ENCODE measurements at regions of chr19 and their contacts with region 1.

Region 1: DNA sequence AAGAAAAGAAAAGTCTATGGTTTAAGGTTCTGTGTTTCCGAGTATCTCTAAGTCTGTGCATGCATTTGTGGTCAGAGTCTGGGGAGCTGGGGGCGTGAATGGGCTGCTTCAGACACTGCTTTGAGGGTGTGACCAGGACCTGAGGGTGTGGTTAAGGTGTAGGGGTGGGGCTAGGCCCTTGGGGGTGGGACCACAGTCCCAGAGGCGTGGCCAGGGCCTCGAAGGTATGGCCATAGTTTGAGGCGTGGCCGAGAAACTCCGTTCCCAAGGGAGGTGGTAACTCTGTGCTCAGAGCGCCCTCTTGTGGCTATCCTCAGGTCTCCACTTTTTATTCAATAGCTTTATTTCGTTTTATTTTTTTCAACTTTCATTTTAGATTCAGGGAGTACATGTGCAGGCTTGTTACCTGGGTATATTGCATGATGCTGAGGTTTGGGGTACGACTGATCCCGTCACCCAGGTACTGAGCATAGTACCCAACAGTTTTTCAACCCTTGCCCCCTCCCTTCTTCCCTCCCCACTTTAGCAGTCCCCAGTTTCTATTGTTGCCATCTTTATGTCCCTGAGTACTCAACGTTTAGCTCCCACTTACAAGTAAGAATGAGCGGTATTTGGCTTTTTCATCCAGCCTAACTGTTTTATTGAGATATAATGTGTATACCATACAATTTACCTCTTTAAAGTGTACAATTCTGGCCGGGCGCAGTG is 7.0 kb upstream of the CBLC start:
- H3K4me3 Mint-ChIP-seq: peak overlapping the region; percentile 64
- H3K27ac Mint-ChIP-seq: peak overlapping the region; percentile 87
- H3K4me1 Mint-ChIP-seq: peaks cover 41% of the 10 kb centered on the region
- H3K27me3 Mint-ChIP-seq: peaks cover 8% of the 10 kb centered on the region

Region 2: DNA sequence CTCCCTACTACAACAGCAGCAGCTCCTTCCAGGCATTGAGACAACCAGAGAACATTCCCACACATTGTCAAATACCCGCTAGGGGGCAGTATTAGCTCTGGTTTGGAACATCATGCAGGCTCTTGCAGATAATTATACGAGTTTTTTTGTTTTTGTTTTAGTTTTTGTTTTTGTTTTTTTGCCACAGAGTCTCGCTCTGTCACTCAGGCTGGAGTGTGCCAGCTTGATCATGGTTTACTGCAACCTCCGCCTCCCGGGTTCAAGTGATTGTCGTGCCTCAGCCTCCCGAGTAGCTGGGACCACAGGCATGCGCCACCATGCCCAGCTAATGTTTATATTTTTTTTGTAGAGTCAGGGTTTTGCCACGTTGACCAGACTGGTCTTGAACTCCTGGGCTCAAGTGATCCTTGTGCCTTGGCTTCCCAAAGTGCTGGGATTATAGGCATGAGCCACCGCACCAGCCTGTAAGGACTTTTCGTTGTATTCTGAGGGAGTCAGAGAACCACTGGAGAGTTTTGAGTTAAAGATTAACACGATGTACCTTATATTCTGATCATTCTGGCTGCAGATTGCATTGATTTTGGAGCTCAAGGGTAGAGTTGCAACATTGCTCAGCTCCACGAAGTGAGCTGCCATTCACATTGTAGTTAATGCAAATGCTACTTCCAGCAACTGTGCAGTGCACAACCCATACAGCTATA is 199.6 kb before region 1 on chr19:
- intact Hi-C with region 1: loop called (anchors 2 kb)
- H3K4me3 Mint-ChIP-seq: no peak overlapping the region
- H3K27ac Mint-ChIP-seq: no peak overlapping the region
- H3K4me1 Mint-ChIP-seq: peaks cover 39% of the 10 kb centered on the region
- H3K27me3 Mint-ChIP-seq: peaks cover 16% of the 10 kb centered on the region

Region 3: GRCh38 chr19:44657211-44657921 is 113.3 kb before region 1 on chr19:
- intact Hi-C with region 1: loop called (anchors 1 kb)
- H3K4me3 Mint-ChIP-seq: no peak overlapping the region
- H3K27ac Mint-ChIP-seq: no peak overlapping the region
- H3K4me1 Mint-ChIP-seq: peaks cover 28% of the 10 kb centered on the region
- H3K27me3 Mint-ChIP-seq: no peaks in the 10 kb centered on the region

Region 4: DNA sequence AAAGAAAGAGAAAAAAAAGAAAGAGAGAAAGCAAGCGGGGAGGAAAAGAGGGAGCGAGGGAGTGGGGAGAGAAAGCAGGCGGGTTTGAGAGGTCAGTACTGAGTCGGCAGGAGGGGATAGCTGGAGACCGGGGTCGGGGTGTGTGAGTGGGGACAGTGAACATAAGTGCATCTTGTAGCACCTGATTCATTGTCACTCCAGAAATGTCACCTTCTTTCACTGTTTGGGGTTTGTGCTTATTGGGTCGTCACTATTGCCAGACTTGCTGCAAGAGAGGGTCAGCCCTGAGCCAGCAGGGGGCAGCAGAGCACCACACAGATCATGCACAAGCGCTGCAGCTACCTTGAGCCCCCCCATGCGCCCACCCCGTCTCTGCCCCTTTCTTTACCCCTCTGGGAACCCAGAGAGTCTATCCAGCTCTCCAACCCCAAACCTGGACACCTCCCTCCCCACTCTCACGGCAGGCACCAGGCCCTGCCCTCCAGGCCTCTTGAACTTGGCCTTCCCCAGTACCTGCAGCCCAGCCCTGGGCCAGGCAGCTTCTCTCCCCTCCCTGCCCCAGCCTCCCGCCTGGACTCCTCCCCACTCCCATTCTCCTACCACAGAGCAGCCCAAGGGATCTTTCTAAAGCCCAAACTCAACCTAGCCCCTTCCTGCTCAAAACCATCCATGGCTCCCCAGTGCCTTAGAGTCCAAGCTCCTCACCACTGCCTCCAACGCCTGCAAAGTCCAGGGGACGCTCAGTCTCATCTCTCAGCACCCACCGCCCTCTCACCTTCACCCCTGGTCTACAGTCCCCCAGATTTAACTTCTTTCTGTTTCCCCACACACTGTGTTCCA is 81.4 kb before region 1 on chr19:
- intact Hi-C with region 1: loop called (anchors 2 kb)
- H3K4me3 Mint-ChIP-seq: no peak overlapping the region
- H3K27ac Mint-ChIP-seq: peak overlapping the region; percentile 67
- H3K4me1 Mint-ChIP-seq: peaks cover 74% of the 10 kb centered on the region
- H3K27me3 Mint-ChIP-seq: peaks cover 6% of the 10 kb centered on the region

Region 5: GRCh38 chr19:44723952-44724319 is 46.8 kb before region 1 on chr19:
- intact Hi-C with region 1: loop called (anchors 1 kb)
- H3K4me3 Mint-ChIP-seq: peak overlapping the region; percentile 53
- H3K27ac Mint-ChIP-seq: peak overlapping the region; percentile 73
- H3K4me1 Mint-ChIP-seq: peaks cover 84% of the 10 kb centered on the region
- H3K27me3 Mint-ChIP-seq: peaks cover 1% of the 10 kb centered on the region

Region 6: GRCh38 chr19:44747739-44748425 is 22.8 kb before region 1 on chr19:
- intact Hi-C with region 1: loop called (anchors 2 kb)
- H3K4me3 Mint-ChIP-seq: peak overlapping the region; percentile 79
- H3K27ac Mint-ChIP-seq: peak overlapping the region; percentile 93
- H3K4me1 Mint-ChIP-seq: peaks cover 68% of the 10 kb centered on the region
- H3K27me3 Mint-ChIP-seq: no peaks in the 10 kb centered on the region

Region 7: DNA sequence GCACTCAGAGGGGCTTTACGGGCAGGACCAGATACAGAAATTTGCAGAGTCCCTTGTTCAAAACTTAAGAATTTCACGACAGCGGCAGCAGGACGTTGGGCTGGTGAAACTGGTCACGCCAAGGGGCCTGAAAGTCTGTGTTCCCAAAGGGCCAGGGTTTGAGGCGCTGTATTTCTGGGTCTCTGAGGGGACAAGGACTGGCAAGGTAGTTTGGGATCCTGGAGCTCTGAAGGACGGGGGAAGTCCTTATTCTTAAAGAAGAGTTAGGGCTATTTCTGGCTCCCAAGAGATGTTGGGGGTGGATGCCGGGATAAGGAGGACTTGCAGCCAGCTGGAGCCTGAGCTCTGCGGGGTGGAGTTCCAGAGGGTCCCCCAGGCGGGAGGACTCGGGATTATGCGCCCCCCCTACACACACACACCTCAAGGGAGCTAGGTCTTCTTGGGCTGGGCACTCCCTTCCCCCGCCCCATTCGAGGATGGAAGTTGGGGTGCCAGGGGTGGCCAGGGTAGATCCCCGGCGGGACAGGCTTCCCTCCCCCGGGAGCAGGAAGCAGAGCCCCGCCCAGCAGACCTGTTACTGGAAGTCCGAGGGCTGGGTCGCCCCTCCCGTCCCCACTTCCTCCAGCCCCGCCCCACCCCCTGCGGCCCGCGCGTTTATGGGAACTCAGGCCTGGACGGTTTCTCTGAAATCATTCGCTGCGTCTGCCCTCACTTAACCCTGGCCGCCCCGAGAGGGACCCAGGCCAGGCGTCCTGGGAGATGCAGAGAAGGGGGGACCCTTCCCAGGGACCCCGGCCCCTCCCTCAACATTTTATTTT is 16.6 kb before region 1 on chr19:
- intact Hi-C with region 1: loop called (anchors 2 kb)
- H3K4me3 Mint-ChIP-seq: peak overlapping the region; percentile 97
- H3K27ac Mint-ChIP-seq: peak overlapping the region; percentile 97
- H3K4me1 Mint-ChIP-seq: peaks cover 65% of the 10 kb centered on the region
- H3K27me3 Mint-ChIP-seq: no peaks in the 10 kb centered on the region

Region 8: DNA sequence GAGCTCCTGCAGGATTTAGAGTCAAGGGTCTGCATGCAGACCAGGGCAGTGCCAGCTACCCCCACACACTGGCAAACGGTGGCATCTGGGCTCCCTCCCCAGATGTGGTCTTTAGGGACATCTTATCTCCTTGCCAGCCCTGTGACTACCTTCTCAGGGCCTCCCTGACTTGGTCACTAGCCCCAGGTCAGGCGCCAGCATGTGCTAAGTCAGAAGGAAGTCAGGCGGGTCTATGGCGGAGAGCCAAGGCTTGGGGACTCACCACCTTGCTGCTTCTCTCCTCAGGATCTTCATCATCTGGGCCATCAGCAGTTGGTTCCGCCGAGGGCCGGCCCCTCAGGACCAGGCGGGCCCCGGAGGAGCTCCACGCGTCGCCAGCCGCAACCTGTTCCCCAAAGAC is 202.1 kb after region 1 on chr19:
- intact Hi-C with region 1: no loop called
- H3K4me3 Mint-ChIP-seq: no peak overlapping the region
- H3K27ac Mint-ChIP-seq: no peak overlapping the region
- H3K4me1 Mint-ChIP-seq: no peaks in the 10 kb centered on the region
- H3K27me3 Mint-ChIP-seq: no peaks in the 10 kb centered on the region